ENCODE measurements at regions of chr5 and their contacts with region 1.

Region 1: GRCh38 chr5:172458976-172459782 is 4.9 kb upstream of the SH3PXD2B start:
- DNase-seq: no peak
- H3K4me3 Mint-ChIP-seq: no peak overlapping the region
- H3K27ac Mint-ChIP-seq: no peak overlapping the region
- H3K4me1 Mint-ChIP-seq: peaks cover 21% of the 10 kb centered on the region
- H3K27me3 Mint-ChIP-seq: peaks cover 17% of the 10 kb centered on the region

Region 2: GRCh38 chr5:172697123-172698121 is 238.2 kb after region 1 on chr5:
- CTCF ChIA-PET with region 1: interaction called, 10 read pairs
- POLR2A ChIA-PET with region 1: no interaction called
- DNase-seq: peak; percentile 93
- H3K4me3 Mint-ChIP-seq: peak overlapping the region; percentile 89
- H3K27ac Mint-ChIP-seq: peak overlapping the region; percentile 98
- H3K4me1 Mint-ChIP-seq: peaks cover 31% of the 10 kb centered on the region
- H3K27me3 Mint-ChIP-seq: peaks cover 22% of the 10 kb centered on the region

Measured in activated CD4-positive, alpha-beta T cell treated with anti-CD3 and anti-CD28 coated beads, Interleukin-2, amount 10 ng/mL, durations not matched to agents 7 days and 5 days (primary cell).